ENCODE measurements at regions of chr6 and their contacts with region 1.

Region 1: DNA sequence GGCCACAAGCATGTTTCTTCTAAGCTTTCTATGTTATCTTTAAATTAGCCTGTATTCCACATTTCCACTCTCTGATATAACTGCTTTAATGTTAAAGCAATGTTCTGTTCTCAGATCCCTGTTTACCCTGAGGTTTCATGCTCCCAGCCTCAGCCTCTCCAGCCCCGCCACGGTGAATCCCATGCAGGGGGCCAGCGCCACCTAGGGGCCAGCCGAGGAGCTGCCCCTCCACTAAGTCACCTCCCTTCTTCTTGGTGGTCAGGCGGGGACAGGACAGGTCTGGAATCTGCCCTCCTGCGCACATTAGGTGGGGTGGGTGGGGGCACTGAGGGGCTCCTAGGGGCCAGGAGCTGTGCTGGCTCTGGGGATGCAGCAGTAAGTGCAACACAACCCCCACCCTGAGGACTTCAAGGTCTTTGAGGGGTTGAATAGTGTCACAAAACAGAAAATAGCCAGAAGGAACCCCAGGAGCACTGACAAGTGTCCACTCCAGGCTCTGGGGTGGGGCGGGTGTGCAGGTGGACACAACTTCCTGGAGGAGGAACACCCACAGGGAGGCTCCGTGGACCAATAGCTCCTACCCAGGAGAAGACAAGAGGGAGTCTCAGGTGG is 61.6 kb downstream of the RAB44 start:
- DNase-seq: peak; percentile 82
- ATAC-seq: peak; percentile 45
- H3K4me3 Mint-ChIP-seq: no peak overlapping the region
- H3K27ac Mint-ChIP-seq: no peak overlapping the region
- H3K4me1 Mint-ChIP-seq: peaks cover 38% of the 10 kb centered on the region
- H3K27me3 Mint-ChIP-seq: no peaks in the 10 kb centered on the region
- CTCF ChIP-seq: peak; percentile 92

Region 2: GRCh38 chr6:36605560-36606391 is 153.5 kb before region 1 on chr6:
- CTCF ChIA-PET with region 1: interaction called, 6 read pairs
- POLR2A ChIA-PET with region 1: interaction called, 14 read pairs
- intact Hi-C with region 1: no loop called
- DNase-seq: no peak
- ATAC-seq: no peak
- H3K4me3 Mint-ChIP-seq: no peak overlapping the region
- H3K27ac Mint-ChIP-seq: peak overlapping the region; percentile 70
- H3K4me1 Mint-ChIP-seq: peaks cover 70% of the 10 kb centered on the region
- H3K27me3 Mint-ChIP-seq: no peaks in the 10 kb centered on the region
- CTCF ChIP-seq: no peak

Region 3: DNA sequence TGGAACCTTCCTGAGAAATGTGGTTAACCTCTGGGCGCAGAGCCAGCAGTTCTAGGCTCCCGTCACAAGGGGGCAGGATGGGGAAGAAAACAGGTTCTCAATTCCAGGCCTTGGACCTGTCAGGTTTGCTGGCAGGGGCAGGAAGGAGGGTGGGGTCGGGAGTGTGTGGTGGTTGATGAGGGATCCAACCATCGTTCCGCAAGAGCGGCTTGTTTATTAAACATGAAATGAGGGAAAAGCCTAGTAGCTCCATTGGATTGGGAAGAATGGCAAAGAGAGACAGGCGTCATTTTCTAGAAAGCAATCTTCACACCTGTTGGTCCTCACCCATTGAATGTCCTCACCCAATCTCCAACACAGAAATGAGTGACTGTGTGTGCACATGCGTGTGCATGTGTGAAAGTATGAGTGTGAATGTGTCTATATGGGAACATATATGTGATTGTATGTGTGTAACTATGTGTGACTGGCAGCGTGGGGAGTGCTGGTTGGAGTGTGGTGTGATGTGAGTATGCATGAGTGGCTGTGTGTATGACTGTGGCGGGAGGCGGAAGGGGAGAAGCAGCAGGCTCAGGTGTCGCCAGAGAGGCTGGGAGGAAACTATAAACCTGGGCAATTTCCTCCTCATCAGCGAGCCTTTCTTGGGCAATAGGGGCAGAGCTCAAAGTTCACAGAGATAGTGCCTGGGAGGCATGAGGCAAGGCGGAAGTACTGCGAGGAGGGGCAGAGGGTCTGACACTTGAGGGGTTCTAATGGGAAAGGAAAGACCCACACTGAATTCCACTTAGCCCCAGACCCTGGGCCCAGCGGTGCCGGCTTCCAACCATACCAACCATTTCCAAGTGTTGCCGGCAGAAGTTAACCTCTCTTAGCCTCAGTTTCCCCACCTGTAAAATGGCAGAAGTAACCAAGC is 135.5 kb before region 1 on chr6:
- CTCF ChIA-PET with region 1: interaction called, 75 read pairs
- POLR2A ChIA-PET with region 1: no interaction called
- intact Hi-C with region 1: loop called (anchors 2 kb)
- DNase-seq: peak; percentile 83
- ATAC-seq: peak; percentile 94
- H3K4me3 Mint-ChIP-seq: no peak overlapping the region
- H3K27ac Mint-ChIP-seq: peak overlapping the region; percentile 61
- H3K4me1 Mint-ChIP-seq: peaks cover 13% of the 10 kb centered on the region
- H3K27me3 Mint-ChIP-seq: no peaks in the 10 kb centered on the region
- CTCF ChIP-seq: peak; percentile 88

Region 4: GRCh38 chr6:36724514-36725390 is 34.5 kb before region 1 on chr6:
- CTCF ChIA-PET with region 1: interaction called, 13 read pairs
- POLR2A ChIA-PET with region 1: no interaction called
- intact Hi-C with region 1: no loop called
- DNase-seq: peak; percentile 85
- ATAC-seq: peak; percentile 57
- H3K4me3 Mint-ChIP-seq: no peak overlapping the region
- H3K27ac Mint-ChIP-seq: no peak overlapping the region
- H3K4me1 Mint-ChIP-seq: peaks cover 7% of the 10 kb centered on the region
- H3K27me3 Mint-ChIP-seq: no peaks in the 10 kb centered on the region
- CTCF ChIP-seq: peak; percentile 51

Region 5: GRCh38 chr6:36780442-36781177 is 21.4 kb after region 1 on chr6:
- CTCF ChIA-PET with region 1: interaction called, 477 read pairs
- POLR2A ChIA-PET with region 1: interaction called, 4 read pairs
- intact Hi-C with region 1: no loop called
- DNase-seq: no peak
- ATAC-seq: no peak
- H3K4me3 Mint-ChIP-seq: no peak overlapping the region
- H3K27ac Mint-ChIP-seq: no peak overlapping the region
- H3K4me1 Mint-ChIP-seq: peaks cover 2% of the 10 kb centered on the region
- H3K27me3 Mint-ChIP-seq: peaks cover 1% of the 10 kb centered on the region
- CTCF ChIP-seq: no peak